A673 (cell line): ENCODE measurements at regions of chr4 and their contacts with region 1.

Region 1: DNA sequence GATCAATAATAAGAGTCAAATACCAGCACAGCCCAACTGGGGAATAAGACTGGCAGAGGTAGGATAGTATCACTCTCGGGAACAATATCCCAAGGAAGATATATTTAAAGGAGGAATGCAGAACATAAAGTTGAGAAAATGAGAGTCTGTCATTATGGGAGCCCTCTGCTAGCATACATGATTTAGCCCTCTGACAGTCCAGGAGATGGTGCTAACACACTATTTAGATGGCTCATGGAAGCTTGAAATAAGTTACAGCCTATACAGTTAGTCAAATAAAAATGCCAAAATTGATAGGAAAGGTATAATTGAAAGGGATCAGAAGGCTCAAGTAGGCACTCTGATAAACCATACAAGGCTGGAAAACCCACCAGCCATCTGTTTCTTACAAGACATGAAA is 201.0 kb upstream of the NEIL3 start:
- DNase-seq: no peak
- H3K4me3 ChIP-seq: no peak overlapping the region
- H3K27ac ChIP-seq: no peak overlapping the region
- H3K4me1 ChIP-seq: no peaks in the 10 kb centered on the region
- H3K27me3 ChIP-seq: no peaks in the 10 kb centered on the region
- CTCF ChIP-seq: no peak

Region 2: DNA sequence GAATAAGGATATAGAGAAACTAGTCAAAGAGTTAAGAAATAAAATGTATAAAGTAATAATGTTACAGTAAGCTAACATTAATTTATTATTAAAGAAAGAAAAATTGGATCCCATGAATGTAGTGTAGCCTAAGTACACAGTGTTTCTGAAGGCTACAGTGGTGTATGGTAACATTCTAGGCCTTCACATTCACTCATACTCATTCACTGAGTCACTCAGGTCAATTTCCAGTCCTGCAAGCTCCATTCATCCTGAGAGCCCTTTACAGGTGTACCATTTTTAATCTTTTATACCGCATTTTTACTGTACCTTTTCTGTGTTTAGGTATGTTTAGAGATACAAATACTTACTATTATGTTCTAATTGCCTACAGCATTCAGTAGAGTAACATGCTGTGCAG is 454.2 kb after region 1 on chr4:
- CTCF ChIA-PET with region 1: no interaction called
- POLR2A ChIA-PET with region 1: no interaction called
- intact Hi-C with region 1: loop called (anchors 2 kb)
- DNase-seq: no peak
- H3K4me3 ChIP-seq: no peak overlapping the region
- H3K27ac ChIP-seq: no peak overlapping the region
- H3K4me1 ChIP-seq: no peaks in the 10 kb centered on the region
- H3K27me3 ChIP-seq: no peaks in the 10 kb centered on the region
- CTCF ChIP-seq: no peak